ENCODE measurements at regions of chr6 and their contacts with region 1.

Region 1: DNA sequence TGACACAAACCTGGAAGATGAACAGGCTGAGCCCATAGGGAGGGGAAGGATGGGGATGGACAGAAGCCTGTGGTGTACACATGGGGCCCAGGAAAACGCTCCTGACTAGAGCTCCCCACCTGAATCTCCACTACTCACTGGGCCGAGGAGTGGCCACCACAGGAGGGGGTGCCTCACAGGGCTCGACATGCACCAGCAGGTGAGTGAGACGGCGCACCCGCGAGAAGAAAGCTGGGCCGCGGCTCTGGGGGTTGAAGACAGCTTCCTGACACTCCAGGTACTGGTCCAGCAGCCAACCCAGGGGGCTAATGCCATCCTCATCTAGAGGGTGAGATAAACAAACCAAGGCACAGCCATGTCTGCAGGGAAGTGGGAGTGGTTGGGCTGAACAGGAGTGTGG is 10.3 kb downstream of the CUL7 start:
- DNase-seq: no peak
- ATAC-seq: no peak
- H3K4me3 ChIP-seq: no peak overlapping the region
- H3K4me3 Mint-ChIP-seq: no peak overlapping the region
- H3K27ac ChIP-seq: no peak overlapping the region
- H3K27ac Mint-ChIP-seq: no peak overlapping the region
- H3K4me1 ChIP-seq: no peaks in the 10 kb centered on the region
- H3K4me1 Mint-ChIP-seq: no peaks in the 10 kb centered on the region
- H3K27me3 ChIP-seq: no peaks in the 10 kb centered on the region
- H3K27me3 Mint-ChIP-seq: no peaks in the 10 kb centered on the region
- CTCF ChIP-seq: no peak

Region 2: DNA sequence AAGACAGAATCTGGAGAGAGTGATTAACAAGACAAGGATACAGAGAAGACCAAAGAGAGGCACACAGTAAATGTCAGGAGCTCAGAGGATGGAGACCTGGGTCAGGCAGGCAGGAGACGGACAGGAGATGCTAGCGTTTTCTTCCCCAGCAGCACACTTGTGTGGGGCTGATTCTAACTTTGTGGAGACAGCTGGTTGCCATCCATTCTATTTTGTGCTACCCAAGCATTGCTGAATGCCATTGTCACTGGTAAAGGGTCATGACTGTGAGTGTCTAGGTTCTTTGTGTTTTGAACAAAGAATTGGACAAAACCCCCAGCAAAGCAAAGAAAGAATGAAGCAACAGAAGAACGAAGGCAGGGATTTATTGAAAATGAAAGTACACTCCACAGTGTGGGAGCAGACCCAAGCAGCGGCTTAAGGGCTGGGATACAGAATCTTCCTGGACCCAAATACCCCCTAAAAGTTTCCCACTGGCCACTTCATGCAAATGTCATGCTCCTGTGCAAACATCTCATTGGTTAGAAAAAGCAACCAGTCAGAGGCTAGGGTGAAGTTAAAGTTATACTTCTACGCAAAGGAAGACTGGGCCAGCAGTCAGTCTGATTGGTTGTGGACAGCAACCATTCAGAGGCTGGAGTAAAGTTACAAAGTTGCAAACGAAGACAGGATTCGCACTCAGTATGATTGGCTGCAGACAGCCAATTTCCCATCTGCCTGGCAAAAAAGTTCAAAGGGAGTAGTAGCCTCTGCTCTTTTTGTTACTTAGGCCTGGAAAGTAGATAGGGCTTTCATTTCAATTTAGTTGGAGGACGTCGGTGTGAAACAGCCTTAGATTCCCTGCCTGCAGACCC is 50.4 kb after region 1 on chr6:
- CTCF ChIA-PET with region 1: no interaction called
- POLR2A ChIA-PET with region 1: interaction called, 11 read pairs
- intact Hi-C with region 1: no loop called
- DNase-seq: no peak
- ATAC-seq: no peak
- H3K4me3 ChIP-seq: no peak overlapping the region
- H3K4me3 Mint-ChIP-seq: peak overlapping the region; percentile 27
- H3K27ac ChIP-seq: no peak overlapping the region
- H3K27ac Mint-ChIP-seq: no peak overlapping the region
- H3K4me1 ChIP-seq: no peaks in the 10 kb centered on the region
- H3K4me1 Mint-ChIP-seq: peaks cover 5% of the 10 kb centered on the region
- H3K27me3 ChIP-seq: no peaks in the 10 kb centered on the region
- H3K27me3 Mint-ChIP-seq: no peaks in the 10 kb centered on the region
- CTCF ChIP-seq: no peak